ENCODE measurements at regions of chr11 and their contacts with region 1.

Region 1: GRCh38 chr11:31903225-31904074 is 92.3 kb upstream of the PAX6 start:
- DNase-seq: no peak

Region 2: GRCh38 chr11:32225571-32226285 is 322.3 kb after region 1 on chr11:
- intact Hi-C with region 1: loop called in 1 of 2 experiments (anchors 2 kb)
- DNase-seq: no peak